ENCODE measurements at regions of chr10 and their contacts with region 1.

Region 1: GRCh38 chr10:15793664-15794063 is 66.6 kb downstream of the MINDY3 start:
- DNase-seq: no peak
- ATAC-seq: no peak
- H3K4me3 ChIP-seq: no peak overlapping the region
- H3K27ac ChIP-seq: no peak overlapping the region
- H3K4me1 ChIP-seq: no peaks in the 10 kb centered on the region
- H3K27me3 ChIP-seq: no peaks in the 10 kb centered on the region
- CTCF ChIP-seq: no peak

Region 2: GRCh38 chr10:14775656-14776055 is 1018.0 kb before region 1 on chr10:
- CTCF ChIA-PET with region 1: no interaction called
- POLR2A ChIA-PET with region 1: interaction called, 14 read pairs
- in situ Hi-C with region 1: no loop called
- intact Hi-C with region 1: no loop called
- DNase-seq: no peak
- ATAC-seq: no peak
- H3K4me3 ChIP-seq: no peak overlapping the region
- H3K27ac ChIP-seq: no peak overlapping the region
- H3K4me1 ChIP-seq: no peaks in the 10 kb centered on the region
- H3K27me3 ChIP-seq: no peaks in the 10 kb centered on the region
- CTCF ChIP-seq: no peak

Region 3: GRCh38 chr10:15223174-15223573 is 570.5 kb before region 1 on chr10:
- CTCF ChIA-PET with region 1: no interaction called
- POLR2A ChIA-PET with region 1: no interaction called
- in situ Hi-C with region 1: no loop called
- intact Hi-C with region 1: no loop called
- DNase-seq: no peak
- ATAC-seq: no peak
- H3K4me3 ChIP-seq: no peak overlapping the region
- H3K27ac ChIP-seq: no peak overlapping the region
- H3K4me1 ChIP-seq: no peaks in the 10 kb centered on the region
- H3K27me3 ChIP-seq: no peaks in the 10 kb centered on the region
- CTCF ChIP-seq: no peak

Region 4: DNA sequence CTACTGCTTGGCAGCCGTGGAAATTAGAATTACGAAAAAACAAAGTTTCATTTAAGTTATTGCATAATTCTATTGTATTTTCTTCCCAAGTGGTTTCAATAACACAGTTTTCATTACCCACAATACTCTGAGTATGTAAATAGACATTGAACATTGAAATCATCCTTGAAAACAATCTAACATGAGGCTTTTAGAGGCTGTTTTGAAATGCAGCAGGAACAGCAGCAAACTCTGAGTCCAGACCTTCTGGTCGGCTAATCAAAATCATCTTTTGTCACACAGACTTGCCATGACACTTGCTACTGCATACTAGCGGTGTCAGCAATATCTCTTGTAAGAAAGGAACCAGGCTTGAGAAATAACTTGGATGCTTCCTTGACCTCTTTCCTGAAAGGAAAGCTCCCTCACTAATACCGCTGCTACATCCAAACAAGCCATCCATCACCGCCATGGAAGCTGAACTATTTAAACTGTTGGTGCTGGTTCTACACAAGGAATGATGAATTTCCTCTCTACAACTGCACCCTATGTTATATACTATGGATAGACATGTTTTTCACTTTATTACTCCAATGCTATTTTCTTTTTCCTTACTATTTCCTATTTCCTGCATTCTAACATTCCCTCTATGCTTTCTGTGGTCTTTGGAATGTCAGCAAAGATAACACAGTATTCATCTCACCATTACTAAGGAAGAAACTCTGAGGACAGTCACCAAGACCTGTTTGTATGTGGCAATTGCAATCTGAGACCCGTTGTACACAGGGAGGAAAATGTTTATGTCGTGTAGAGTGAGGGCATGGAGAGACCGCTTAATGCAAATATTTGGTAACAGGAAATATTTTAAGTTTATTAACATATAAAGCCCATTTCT is 204.8 kb before region 1 on chr10:
- CTCF ChIA-PET with region 1: no interaction called
- POLR2A ChIA-PET with region 1: no interaction called
- in situ Hi-C with region 1: no loop called
- intact Hi-C with region 1: no loop called
- DNase-seq: no peak
- ATAC-seq: no peak
- H3K4me3 ChIP-seq: no peak overlapping the region
- H3K27ac ChIP-seq: no peak overlapping the region
- H3K4me1 ChIP-seq: no peaks in the 10 kb centered on the region
- H3K27me3 ChIP-seq: no peaks in the 10 kb centered on the region
- CTCF ChIP-seq: no peak

Measured in Panc1 (cell line).